ENCODE measurements at regions of chrX and their contacts with region 1.

Region 1: DNA sequence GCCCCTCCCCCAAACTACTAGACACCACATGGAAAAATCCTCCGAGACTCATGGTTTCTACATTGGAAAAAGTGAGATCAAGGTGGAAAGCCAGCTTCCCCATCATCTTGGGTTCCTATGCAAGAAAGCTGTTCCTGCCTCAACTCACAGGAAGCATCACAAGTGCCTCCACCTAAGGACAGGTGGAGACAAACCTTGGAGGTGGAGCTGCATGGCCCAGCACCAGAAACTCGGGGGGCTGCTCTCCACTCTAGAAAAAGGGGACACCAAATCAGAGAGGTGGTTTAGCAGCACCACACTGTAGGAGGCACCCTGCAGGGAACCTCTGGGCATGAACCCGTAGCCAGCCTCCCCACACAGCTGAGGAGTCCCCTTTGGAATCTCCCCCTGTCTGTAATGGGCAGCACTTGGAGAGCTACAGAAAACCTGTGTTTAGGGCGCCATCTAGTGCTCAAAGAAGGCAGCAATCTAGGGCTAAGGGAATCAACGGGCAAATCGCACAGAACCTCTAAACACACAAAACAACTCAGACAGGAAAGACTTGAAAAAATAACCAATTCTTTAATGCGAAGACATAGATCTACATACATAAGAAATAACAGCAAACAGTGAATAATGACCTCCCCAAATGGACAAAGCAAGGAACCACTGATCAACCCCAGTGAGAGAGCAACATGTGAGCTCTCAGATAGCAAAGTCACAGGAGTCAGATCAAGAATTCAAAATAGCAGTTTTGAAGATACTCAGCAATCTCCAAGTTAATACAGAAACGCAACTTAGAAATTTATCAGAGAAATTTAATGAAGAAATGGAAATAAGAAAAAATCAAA is 37.0 kb upstream of the ZBTB33 start:
- DNase-seq: peak; percentile 75
- H3K4me3 Mint-ChIP-seq: no peak overlapping the region
- H3K27ac Mint-ChIP-seq: no peak overlapping the region
- H3K4me1 Mint-ChIP-seq: peaks cover 6% of the 10 kb centered on the region
- H3K27me3 Mint-ChIP-seq: no peaks in the 10 kb centered on the region

Region 2: DNA sequence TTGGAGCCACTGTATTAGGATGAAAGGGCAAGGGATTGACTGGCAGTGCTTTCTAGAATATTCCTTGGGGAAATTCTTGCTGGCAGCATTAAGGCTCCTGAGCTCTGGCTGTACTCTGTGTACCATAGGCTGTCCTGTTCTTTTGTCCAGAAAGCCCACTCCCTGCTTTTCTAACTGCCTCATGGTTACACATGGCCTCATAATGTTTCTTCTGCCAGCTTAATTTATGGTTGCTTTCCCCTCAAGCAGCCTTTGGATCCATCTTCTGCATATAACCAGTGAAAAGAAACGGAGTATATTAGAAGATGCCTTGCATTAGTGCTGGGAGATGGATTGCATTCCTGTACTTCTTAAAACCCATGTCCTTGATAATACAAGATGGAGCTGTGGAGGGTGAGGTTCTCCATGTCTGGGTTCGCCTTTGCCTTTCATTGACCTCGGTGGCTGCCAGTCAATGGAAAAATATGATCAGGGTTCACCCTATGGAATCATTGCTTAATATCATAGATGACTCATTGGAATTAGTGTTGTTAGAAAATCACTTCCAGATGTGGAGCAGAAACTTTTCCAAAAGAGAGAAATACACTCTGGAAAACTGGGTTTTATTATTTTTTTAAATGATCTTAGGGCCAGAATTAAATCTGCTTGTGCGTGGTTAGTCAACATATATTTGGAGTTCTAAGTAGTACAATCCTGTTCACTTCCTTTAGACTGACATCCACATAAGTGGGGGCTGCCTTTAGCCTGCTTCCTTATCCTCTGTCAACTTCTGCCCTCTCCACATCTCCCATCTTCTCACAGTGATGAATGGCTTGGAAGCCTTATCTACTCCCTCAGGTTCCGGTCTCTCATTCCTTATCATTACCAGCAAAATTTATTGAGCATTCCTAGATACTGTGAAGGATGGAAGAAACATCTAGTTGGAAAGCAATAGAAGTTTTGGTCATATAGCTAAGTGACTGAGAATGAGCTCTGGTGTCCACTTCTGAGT is 1693.1 kb before region 1 on chrX:
- CTCF ChIA-PET with region 1: no interaction called
- intact Hi-C with region 1: no loop called
- DNase-seq: no peak
- H3K4me3 Mint-ChIP-seq: no peak overlapping the region
- H3K27ac Mint-ChIP-seq: peak overlapping the region; percentile 65
- H3K4me1 Mint-ChIP-seq: peaks cover 71% of the 10 kb centered on the region
- H3K27me3 Mint-ChIP-seq: no peaks in the 10 kb centered on the region

Region 3: DNA sequence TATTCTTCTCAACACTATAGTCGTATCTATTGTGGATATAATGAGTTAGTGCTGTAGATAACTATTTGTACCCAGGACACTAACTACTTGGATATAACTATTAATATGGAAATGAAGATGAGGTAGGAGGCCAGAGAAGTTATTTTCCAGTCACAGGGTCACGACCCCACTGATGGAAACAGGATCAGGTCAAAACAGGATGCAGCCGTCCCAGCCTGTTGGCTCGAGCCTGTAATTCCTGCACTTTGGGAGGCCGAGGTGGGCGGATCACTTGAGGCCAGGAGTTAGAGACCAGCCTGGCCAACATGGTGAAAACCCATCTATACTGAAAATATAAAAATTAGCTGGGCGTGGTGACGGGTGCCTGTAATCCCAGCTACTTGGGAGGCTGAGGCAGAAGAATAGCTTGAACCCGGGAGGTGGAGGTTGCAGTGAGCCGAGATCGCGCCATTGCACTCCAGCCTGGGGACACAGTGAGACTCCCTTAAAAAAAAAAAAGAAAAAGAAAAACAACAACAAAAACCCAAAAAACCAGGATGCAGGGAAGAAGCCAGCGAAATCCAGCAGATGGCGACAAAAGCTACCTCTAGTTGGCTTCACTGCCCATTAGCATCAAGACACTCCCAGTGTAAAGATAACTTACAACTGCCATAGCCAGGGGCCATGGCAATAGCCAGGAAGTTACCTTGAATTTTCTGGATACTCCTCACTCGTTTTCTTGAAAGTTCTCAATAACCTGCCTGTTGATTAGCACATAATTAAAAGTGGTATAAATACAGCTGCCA is 232.2 kb before region 1 on chrX:
- CTCF ChIA-PET with region 1: no interaction called
- intact Hi-C with region 1: loop called (anchors 1 kb)
- DNase-seq: peak; percentile 45
- H3K4me3 Mint-ChIP-seq: no peak overlapping the region
- H3K27ac Mint-ChIP-seq: no peak overlapping the region
- H3K4me1 Mint-ChIP-seq: no peaks in the 10 kb centered on the region
- H3K27me3 Mint-ChIP-seq: no peaks in the 10 kb centered on the region

Region 4: GRCh38 chrX:120109378-120109777 is 104.3 kb before region 1 on chrX:
- CTCF ChIA-PET with region 1: no interaction called
- intact Hi-C with region 1: loop called (anchors 10 kb)
- DNase-seq: no peak
- H3K4me3 Mint-ChIP-seq: no peak overlapping the region
- H3K27ac Mint-ChIP-seq: no peak overlapping the region
- H3K4me1 Mint-ChIP-seq: no peaks in the 10 kb centered on the region
- H3K27me3 Mint-ChIP-seq: no peaks in the 10 kb centered on the region

Region 5: GRCh38 chrX:120224388-120224787 is 10.7 kb after region 1 on chrX:
- CTCF ChIA-PET with region 1: interaction called, 13 read pairs
- intact Hi-C with region 1: no loop called
- DNase-seq: no peak
- H3K4me3 Mint-ChIP-seq: no peak overlapping the region
- H3K27ac Mint-ChIP-seq: no peak overlapping the region
- H3K4me1 Mint-ChIP-seq: no peaks in the 10 kb centered on the region
- H3K27me3 Mint-ChIP-seq: no peaks in the 10 kb centered on the region

Region 6: GRCh38 chrX:120244735-120245498 is 31.3 kb after region 1 on chrX:
- CTCF ChIA-PET with region 1: no interaction called
- intact Hi-C with region 1: loop called (anchors 2 kb)
- DNase-seq: peak; percentile 75
- H3K4me3 Mint-ChIP-seq: peak overlapping the region; percentile 88
- H3K27ac Mint-ChIP-seq: peak overlapping the region; percentile 82
- H3K4me1 Mint-ChIP-seq: peaks cover 23% of the 10 kb centered on the region
- H3K27me3 Mint-ChIP-seq: no peaks in the 10 kb centered on the region

Region 7: DNA sequence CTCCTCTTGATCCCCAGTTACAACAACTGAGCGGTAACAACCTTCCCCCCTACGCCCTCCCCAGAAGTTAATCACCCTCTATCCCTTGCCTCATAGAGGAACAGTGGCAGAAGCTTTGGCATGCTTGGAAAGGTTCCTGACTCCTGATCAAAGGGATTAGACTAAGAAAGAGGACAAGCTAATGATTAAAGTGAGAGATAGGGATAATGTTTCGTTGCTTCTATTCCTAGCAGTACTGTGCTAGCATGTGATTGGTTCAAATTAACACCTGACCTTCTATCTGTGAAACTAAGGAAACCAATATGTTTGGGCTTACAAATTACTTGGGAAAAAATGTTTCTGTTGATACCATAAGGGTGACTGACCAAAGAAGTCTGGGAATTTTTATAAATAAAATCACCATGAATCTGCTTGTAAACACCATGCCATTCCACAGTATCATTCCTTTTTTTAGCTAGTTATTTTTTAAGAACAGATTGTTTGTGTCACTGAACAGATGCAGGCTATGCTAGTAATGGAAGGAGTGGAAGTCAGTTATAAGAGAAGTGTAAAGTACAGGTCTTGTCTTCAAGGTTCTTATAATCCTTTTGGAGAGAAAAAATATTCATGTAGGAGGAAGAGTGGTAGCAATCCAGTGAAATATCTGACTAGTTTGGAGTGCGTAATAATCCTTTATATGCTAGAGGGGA is 136.9 kb after region 1 on chrX:
- CTCF ChIA-PET with region 1: no interaction called
- intact Hi-C with region 1: no loop called
- DNase-seq: no peak
- H3K4me3 Mint-ChIP-seq: no peak overlapping the region
- H3K27ac Mint-ChIP-seq: no peak overlapping the region
- H3K4me1 Mint-ChIP-seq: no peaks in the 10 kb centered on the region
- H3K27me3 Mint-ChIP-seq: no peaks in the 10 kb centered on the region

Measured in activated naive CD4-positive, alpha-beta T cell treated with anti-CD3 and anti-CD28 coated beads for 36 hours (primary cell).